Caco-2 (cell line): ENCODE measurements at regions of chr4 and their contacts with region 1.

Region 1: DNA sequence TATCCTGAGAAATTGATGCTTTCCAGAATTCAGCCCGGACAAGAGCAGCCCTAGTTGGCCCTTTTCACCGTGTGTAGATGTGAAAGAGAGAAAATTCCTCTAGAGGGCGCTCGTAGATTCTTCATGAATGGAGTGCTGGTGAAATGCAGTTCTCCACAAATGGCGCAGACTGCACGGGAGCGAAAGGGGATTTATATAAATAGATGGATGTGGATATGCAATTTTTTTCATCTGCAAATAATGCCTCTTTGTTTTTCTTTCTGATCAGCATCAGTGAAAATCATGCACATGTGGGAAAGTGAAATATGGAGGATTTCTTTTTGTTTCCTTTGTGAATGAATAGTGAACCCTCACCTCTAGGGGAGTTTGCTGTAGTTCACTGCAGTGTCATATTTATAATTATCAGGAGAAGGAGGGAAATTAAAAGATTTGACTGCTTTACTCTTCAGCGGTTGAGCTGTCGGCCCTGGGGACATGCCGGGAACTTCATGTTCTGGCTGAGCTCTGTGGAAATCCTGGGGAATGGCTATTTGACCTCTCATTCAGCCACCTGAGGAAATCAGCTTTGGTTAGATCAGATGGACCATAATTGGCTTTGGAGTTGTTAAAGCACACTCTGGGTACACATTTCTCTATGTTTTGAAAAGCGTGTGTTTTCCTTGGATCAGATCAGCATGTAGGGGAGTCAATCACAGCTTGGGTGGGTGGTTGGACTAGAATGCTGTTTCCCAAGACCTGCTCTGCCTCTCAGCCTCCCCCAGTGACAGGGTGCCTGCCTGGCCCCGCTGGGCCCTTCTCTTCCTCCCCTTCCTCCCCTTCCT is 115.0 kb upstream of the SHISA3 start:
- DNase-seq: peak in 1 of 2 experiments; percentile 66
- H3K4me3 ChIP-seq: no peak overlapping the region
- H3K4me3 Mint-ChIP-seq: no peak overlapping the region
- H3K27ac Mint-ChIP-seq: no peak overlapping the region
- H3K4me1 ChIP-seq: no peaks in the 10 kb centered on the region
- H3K4me1 Mint-ChIP-seq: no peaks in the 10 kb centered on the region
- H3K27me3 ChIP-seq: no peaks in the 10 kb centered on the region
- H3K27me3 Mint-ChIP-seq: peaks cover 3% of the 10 kb centered on the region
- CTCF ChIP-seq: peak; percentile 53 to 80

Region 2: GRCh38 chr4:42302348-42302747 is 20.1 kb after region 1 on chr4:
- CTCF ChIA-PET with region 1: no interaction called
- POLR2A ChIA-PET with region 1: no interaction called
- intact Hi-C with region 1: loop called (anchors 2 kb)
- DNase-seq: peak; percentile 58 to 60
- H3K4me3 ChIP-seq: no peak overlapping the region
- H3K4me3 Mint-ChIP-seq: no peak overlapping the region
- H3K27ac Mint-ChIP-seq: no peak overlapping the region
- H3K4me1 ChIP-seq: no peaks in the 10 kb centered on the region
- H3K4me1 Mint-ChIP-seq: no peaks in the 10 kb centered on the region
- H3K27me3 ChIP-seq: no peaks in the 10 kb centered on the region
- H3K27me3 Mint-ChIP-seq: peaks cover 9% of the 10 kb centered on the region
- CTCF ChIP-seq: peak; percentile 18 to 28

Region 3: DNA sequence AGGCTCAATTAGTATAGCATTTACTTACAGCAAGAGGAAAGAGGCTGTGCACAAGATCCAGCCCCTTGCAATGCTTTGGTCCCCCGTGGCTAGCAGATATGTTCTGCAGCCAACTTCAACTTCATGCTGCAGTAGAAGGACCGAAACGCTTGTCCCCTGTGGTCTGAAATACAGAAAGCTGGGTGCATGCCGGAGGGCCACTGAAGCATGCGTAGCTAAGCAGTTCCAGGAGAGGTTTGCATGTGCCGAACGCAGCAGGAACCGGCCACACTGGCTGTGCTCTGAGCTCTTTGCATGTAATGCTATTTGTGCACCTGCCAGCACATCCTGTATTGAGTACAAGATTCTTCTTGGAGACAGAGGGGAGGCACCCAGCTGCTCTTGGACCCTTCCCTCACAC is 79.2 kb after region 1 on chr4:
- CTCF ChIA-PET with region 1: no interaction called
- POLR2A ChIA-PET with region 1: no interaction called
- intact Hi-C with region 1: no loop called
- DNase-seq: no peak
- H3K4me3 ChIP-seq: no peak overlapping the region
- H3K4me3 Mint-ChIP-seq: no peak overlapping the region
- H3K27ac Mint-ChIP-seq: no peak overlapping the region
- H3K4me1 ChIP-seq: no peaks in the 10 kb centered on the region
- H3K4me1 Mint-ChIP-seq: no peaks in the 10 kb centered on the region
- H3K27me3 ChIP-seq: no peaks in the 10 kb centered on the region; the same call in 1 of the 2 replicates
- H3K27me3 Mint-ChIP-seq: peaks cover 32% of the 10 kb centered on the region
- CTCF ChIP-seq: no peak

Region 4: DNA sequence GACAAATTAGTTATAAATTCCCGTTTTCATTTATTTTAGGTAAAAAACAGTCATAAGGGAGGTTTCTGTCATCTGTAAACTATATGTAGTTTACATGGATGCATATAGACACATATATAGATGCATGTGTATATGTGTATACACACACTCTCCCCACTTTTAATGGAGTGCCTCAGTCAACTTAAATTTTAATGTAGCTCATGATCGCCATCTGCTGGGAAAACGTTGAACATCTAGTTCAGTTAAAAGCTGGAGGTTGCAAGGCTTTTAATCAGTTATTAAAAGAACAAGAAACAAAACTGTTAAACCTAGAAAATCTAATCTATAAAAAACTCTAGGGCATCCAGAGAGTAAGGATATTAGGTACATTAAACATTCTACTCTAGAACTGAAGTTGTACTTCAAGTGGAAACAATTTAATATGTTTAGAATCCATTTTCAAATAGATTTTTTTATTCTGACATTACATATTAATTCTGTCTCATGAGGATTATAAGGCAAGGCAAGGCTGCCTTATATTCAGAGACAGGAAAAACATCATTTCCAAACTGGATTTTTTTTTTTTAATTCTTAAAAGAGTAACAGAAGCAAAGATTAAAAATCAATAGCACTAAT is 237.6 kb after region 1 on chr4:
- CTCF ChIA-PET with region 1: interaction called, 4 read pairs
- POLR2A ChIA-PET with region 1: no interaction called
- intact Hi-C with region 1: loop called (anchors 1 kb)
- DNase-seq: peak in 1 of 2 experiments; percentile 62
- H3K4me3 ChIP-seq: no peak overlapping the region
- H3K4me3 Mint-ChIP-seq: no peak overlapping the region
- H3K27ac Mint-ChIP-seq: no peak overlapping the region
- H3K4me1 ChIP-seq: no peaks in the 10 kb centered on the region
- H3K4me1 Mint-ChIP-seq: no peaks in the 10 kb centered on the region
- H3K27me3 ChIP-seq: no peaks in the 10 kb centered on the region
- H3K27me3 Mint-ChIP-seq: no peaks in the 10 kb centered on the region
- CTCF ChIP-seq: peak; percentile 35 to 40